AG04449 (cell line): ENCODE measurements at regions of chr19 and their contacts with region 1.

Region 1: GRCh38 chr19:7970716-7971448 is 27.4 kb upstream of the TIMM44 start:
- DNase-seq: no peak
- H3K4me3 ChIP-seq: no peak overlapping the region
- CTCF ChIP-seq: peak; percentile 88

Region 2: GRCh38 chr19:7953060-7953459 is 17.8 kb before region 1 on chr19:
- CTCF ChIA-PET with region 1: interaction called, 34 read pairs
- POLR2A ChIA-PET with region 1: no interaction called
- DNase-seq: no peak
- H3K4me3 ChIP-seq: no peak overlapping the region
- CTCF ChIP-seq: no peak

Region 3: GRCh38 chr19:7986321-7987083 is 15.6 kb after region 1 on chr19:
- CTCF ChIA-PET with region 1: interaction called, 24 read pairs
- POLR2A ChIA-PET with region 1: no interaction called
- DNase-seq: peak; percentile 10
- H3K4me3 ChIP-seq: no peak overlapping the region
- CTCF ChIP-seq: no peak

Region 4: DNA sequence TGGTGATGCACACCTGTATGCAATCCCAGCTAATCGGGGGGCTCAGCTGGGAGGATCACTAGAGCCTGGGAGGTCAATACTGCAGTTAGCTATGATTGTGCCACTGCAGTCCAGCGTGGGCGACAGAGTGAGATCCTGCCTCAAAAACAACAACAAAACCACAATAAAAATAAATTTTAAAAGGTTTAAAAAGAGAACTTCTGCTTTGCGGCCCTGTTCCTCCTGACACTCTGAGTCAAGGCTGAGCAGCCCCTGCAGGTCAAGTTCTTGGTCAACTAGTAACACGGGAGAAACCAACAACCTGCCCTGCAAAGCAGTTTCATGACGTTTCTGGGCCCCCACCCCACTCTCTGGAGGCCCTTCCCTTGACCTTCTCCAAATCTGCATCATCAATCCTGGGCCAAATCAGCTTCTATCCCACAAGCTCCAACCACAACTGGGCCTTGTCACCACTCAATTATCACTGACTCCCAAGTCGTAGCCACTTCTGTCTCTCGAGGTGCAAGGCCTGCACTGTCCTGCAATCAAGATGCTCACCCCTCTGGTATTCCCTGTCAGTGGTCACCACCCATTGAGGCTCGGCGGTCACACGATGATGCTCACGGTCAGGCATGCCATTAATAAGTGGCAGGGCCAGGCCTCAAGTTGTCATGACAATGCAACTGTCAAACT is 27.1 kb after region 1 on chr19:
- CTCF ChIA-PET with region 1: interaction called, 16 read pairs
- POLR2A ChIA-PET with region 1: no interaction called
- DNase-seq: no peak
- H3K4me3 ChIP-seq: no peak overlapping the region
- CTCF ChIP-seq: no peak

Region 5: GRCh38 chr19:8005534-8006256 is 34.8 kb after region 1 on chr19 and contains the start of gene ELAVL1:
- CTCF ChIA-PET with region 1: interaction called, 16 read pairs
- POLR2A ChIA-PET with region 1: no interaction called
- DNase-seq: peak; percentile 7
- H3K4me3 ChIP-seq: peak within 1 kb of the TSS; percentile 97
- CTCF ChIP-seq: no peak

Region 6: GRCh38 chr19:8174706-8175105 is 203.8 kb after region 1 on chr19:
- CTCF ChIA-PET with region 1: no interaction called
- POLR2A ChIA-PET with region 1: no interaction called
- DNase-seq: no peak
- H3K4me3 ChIP-seq: no peak overlapping the region
- CTCF ChIP-seq: no peak